GM23248 (cell line): ENCODE measurements at regions of chr2 and their contacts with region 1.

Region 1: DNA sequence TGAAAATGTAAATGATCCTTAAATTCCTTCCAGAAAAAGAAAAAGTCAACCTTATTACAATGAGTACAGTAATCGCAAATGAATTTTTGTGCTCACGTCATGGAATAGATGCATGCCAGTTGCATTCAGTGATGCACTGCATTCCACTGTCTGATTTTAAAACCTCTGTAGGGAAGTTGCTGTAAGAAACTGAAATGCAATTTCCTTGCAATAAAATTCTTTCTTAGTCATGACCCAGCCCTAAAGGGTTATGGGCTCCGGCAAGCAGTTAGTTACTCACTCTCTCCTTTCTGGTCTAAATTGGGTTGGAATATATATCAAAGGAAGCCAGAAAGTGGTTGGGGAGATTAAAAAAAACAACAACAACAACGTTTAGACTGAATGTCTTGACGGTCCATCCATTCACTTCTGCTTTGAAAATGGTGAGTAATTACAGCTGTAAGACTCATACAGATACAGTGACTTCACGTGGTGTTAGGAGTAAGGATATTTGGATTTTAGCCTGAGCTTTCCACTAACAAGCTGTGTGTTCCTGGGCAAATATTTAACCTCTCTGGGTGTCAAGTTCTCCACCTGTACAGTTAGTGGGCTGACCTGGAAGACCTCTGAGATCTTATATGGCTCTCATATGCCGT is 8.6 kb upstream of the RND3 start:
- DNase-seq: peak; percentile 96
- H3K4me3 ChIP-seq: peak overlapping the region; percentile 49
- H3K27ac ChIP-seq: peak overlapping the region; percentile 89
- H3K4me1 ChIP-seq: peaks cover 44% of the 10 kb centered on the region
- H3K27me3 ChIP-seq: no peaks in the 10 kb centered on the region

Region 2: DNA sequence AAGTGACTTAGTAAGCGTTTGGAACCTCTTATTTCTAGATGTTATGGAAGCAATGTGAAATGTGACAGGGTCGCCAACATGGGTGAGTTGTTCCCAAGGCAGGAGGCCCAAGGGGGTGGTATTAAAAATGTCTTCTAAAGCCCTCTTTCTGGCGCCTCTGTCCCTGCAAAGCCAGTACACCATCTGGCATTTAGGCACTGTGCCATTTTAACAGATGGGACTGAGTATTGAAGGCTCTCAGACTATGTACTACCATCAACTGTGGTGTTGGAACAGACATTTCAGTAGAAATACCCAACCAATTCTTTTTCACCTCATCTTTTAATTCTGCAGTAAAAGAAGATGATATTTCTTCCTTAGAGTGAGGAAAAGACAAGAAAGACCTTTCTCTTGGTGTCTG is 524.0 kb before region 1 on chr2:
- in situ Hi-C with region 1: no loop called
- DNase-seq: peak; percentile 18
- H3K4me3 ChIP-seq: no peak overlapping the region
- H3K27ac ChIP-seq: no peak overlapping the region
- H3K4me1 ChIP-seq: peaks cover 5% of the 10 kb centered on the region; the same call in 1 of the 2 replicates
- H3K27me3 ChIP-seq: no peaks in the 10 kb centered on the region

Region 3: DNA sequence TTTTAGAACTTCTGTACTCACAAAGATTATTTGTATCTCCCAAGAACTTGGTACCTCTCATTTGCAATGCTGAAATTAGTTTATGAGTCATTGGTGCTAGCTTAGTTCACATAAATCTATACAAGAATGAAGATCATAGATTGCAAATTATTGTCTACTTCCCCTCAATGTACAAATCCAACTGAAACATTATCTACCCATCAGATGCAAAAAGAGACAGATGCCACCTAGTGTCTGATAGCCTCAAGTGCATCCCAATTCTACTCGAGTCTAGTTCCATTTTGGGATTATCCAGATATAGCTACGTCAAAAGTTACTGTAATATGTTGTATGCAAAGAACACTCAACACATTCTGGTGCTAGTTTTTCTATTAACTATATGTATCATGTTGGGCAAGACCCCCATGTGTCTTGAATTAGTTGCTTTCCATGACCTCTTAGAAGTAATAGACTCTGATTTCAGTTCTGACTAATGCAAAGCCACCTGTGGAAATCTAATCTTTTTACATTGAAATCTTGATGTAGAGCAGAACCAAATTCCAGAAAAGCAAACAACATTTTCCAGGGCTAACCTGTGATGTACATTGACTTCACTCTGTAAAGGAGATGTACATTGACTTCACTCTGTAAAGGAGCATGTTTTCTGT is 555.6 kb after region 1 on chr2:
- in situ Hi-C with region 1: loop called (anchors 10 kb)
- DNase-seq: peak; percentile 70
- H3K4me3 ChIP-seq: no peak overlapping the region
- H3K27ac ChIP-seq: 0 out of 2 replicates have a peak overlapping the region, but pooled peaks have one; percentile 7
- H3K4me1 ChIP-seq: peaks cover 57% of the 10 kb centered on the region
- H3K27me3 ChIP-seq: no peaks in the 10 kb centered on the region